MCF 10A (cell line): ENCODE measurements at regions of chr9 and their contacts with region 1.

Region 1: DNA sequence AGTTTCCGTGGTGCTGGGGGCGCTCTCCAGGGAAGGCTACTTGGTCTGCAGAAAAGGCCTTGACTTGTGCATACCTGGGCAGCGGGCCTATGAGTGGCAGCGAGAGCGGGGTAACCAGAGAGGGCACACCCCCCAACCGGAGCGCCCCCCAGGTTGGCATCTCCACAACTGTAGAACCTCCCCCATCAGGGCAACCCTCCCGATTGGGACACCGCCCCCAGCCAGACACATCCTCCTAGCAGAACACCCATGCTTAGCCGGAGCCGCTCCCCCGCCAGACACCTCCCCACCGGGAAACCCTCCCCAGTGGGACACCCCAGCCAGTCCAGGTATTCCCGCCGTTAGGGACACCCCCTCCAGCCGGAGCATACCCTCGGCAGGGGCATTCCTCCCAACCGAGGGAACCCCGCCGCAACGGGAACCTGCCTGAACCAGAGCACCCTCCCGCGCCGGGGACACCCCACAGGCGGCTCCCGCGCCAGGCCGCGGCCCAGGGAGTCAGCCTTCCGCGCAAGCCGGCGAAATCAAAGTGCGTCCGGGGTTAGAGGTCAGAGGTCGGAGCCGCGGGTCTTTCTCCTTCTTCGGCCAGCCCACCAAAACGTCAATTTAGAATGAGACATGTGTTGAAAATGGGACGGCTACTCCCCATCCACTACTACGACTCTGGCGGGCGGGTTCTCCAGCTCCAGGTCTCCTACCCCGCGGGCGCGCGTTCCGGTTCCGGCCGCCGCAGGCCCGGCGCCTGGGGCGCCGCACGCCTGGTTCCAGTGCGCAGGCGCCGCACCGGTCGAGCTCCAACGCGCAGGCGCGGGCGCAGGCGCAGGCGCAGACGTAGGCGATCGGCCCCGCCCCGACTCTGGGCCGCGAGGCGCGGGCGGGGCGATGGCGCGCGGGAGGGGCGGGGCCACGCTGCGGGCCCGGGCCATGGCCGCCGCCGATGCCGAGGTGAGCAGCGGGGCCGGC is at the start of gene EHMT1:
- DNase-seq: peak; percentile 83
- H3K4me3 Mint-ChIP-seq: peak within 1 kb of the TSS; percentile 95
- H3K27ac Mint-ChIP-seq: peak within 1 kb of the TSS; percentile 91
- H3K4me1 Mint-ChIP-seq: peaks cover 15% of the 10 kb centered on the region
- H3K27me3 Mint-ChIP-seq: no peaks in the 10 kb centered on the region
- CTCF ChIP-seq: no peak
- total RNA-seq, gene EHMT1: 77.2 and 79.7 TPM in 2 replicates

Region 2: GRCh38 chr9:137578518-137579258 is 39.7 kb before region 1 on chr9 and contains the start of gene DPH7:
- CTCF ChIA-PET with region 1: interaction called, 3 read pairs
- POLR2A ChIA-PET with region 1: interaction called, 13 read pairs
- intact Hi-C with region 1: loop called (anchors 5 kb)
- DNase-seq: peak; percentile 92
- H3K4me3 Mint-ChIP-seq: peak within 1 kb of the TSS; percentile 81
- H3K27ac Mint-ChIP-seq: peak within 1 kb of the TSS; percentile 88
- H3K4me1 Mint-ChIP-seq: peaks cover 8% of the 10 kb centered on the region
- H3K27me3 Mint-ChIP-seq: no peaks in the 10 kb centered on the region
- CTCF ChIP-seq: peak; percentile 87
- total RNA-seq, gene DPH7: 45.7 and 46.4 TPM in 2 replicates

Region 3: GRCh38 chr9:137605121-137606004 is 13.0 kb before region 1 on chr9 and contains the start of gene ARRDC1:
- CTCF ChIA-PET with region 1: interaction called, 4 read pairs
- POLR2A ChIA-PET with region 1: interaction called, 21 read pairs
- intact Hi-C with region 1: no loop called
- DNase-seq: peak; percentile 94
- H3K4me3 Mint-ChIP-seq: peak within 1 kb of the TSS; percentile 87
- H3K27ac Mint-ChIP-seq: peak within 1 kb of the TSS; percentile 94
- H3K4me1 Mint-ChIP-seq: peaks cover 22% of the 10 kb centered on the region
- H3K27me3 Mint-ChIP-seq: no peaks in the 10 kb centered on the region
- CTCF ChIP-seq: no peak
- total RNA-seq, gene ARRDC1: 88.9 and 125 TPM in 2 replicates

Region 4: DNA sequence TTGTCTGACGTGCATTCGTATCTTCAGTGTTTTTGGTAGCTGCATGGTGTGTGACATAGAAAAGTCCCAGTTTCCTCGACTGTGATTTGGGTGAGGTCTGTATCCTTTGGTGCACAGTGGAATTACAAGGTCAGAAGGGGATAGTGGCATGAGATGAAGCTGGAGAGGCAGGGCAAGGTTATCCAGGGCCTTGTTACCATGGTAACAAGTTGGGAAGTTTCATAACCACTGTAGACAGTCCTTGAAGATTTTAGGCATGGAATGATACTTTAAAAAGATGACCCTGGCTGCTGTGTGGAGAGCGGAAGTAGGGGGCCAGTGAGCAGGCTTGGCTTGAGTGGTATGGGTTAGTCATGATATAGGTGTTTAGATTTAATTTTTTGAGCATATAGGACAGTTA is 12.3 kb after region 1 on chr9:
- CTCF ChIA-PET with region 1: no interaction called
- POLR2A ChIA-PET with region 1: interaction called, 18 read pairs
- intact Hi-C with region 1: no loop called
- DNase-seq: no peak
- H3K4me3 Mint-ChIP-seq: no peak overlapping the region
- H3K27ac Mint-ChIP-seq: no peak overlapping the region
- H3K4me1 Mint-ChIP-seq: peaks cover 26% of the 10 kb centered on the region
- H3K27me3 Mint-ChIP-seq: no peaks in the 10 kb centered on the region
- CTCF ChIP-seq: no peak

Region 5: DNA sequence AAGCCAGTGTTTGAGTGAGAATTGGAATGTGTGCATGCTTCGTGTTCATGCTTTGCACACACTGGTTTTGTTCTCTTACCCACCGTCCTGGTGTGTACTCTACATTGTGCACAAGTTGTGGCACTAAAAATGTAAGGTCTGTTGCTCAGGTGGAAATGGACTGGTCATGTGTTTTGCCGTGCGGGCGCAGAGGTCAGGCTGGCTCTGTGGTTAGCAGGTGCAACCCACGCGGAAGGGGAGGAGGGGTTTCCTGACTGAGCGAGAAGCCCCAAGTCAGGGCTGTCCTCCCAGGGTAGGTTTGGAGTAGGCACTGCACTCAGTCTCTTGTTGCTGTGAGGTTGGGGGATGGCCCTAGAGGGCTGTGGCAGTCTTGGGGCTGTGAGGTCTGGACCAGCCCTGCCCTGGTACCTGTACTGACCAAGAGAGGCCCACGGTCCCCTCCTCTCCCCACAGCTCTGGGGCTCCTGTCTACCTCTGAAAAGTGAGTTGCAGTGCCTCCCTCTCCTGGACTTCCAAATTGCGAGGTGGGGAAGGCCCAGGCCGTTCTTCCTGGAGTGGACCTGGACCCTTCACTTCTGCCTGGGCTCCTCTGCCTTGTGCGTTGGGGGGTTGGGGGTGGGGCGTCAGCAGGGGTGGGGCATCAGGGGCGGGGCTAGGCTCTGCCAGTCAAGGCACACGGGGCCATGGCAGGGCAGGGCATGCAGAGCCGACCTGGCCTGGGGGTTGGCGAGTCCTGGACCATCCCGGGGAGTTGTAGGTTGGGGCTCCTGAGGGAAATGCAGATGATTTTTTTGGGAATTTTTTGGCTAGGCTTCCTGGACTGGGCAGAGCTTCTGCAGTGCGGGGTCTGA is 87.3 kb after region 1 on chr9:
- CTCF ChIA-PET with region 1: no interaction called
- POLR2A ChIA-PET with region 1: no interaction called
- intact Hi-C with region 1: no loop called
- DNase-seq: no peak
- H3K4me3 Mint-ChIP-seq: no peak overlapping the region
- H3K27ac Mint-ChIP-seq: no peak overlapping the region
- H3K4me1 Mint-ChIP-seq: peaks cover 33% of the 10 kb centered on the region
- H3K27me3 Mint-ChIP-seq: no peaks in the 10 kb centered on the region
- CTCF ChIP-seq: no peak